ENCODE measurements at regions of chr12 and their contacts with region 1.

Region 1: GRCh38 chr12:120580787-120581723 is at the start of gene POP5:
- DNase-seq: peak; percentile 96 to 97 (median 97)
- H3K4me3 ChIP-seq: peak within 1 kb of the TSS; percentile 76 to 96 (median 91)
- H3K27ac ChIP-seq: peak within 1 kb of the TSS; percentile 60 to 78
- H3K4me1 ChIP-seq: peaks cover 8 to 34% (median 21%) of the 10 kb centered on the region in 4 experiments
- H3K27me3 ChIP-seq: peaks cover 0 to 23% (median 9%) of the 10 kb centered on the region in 5 experiments

Region 2: DNA sequence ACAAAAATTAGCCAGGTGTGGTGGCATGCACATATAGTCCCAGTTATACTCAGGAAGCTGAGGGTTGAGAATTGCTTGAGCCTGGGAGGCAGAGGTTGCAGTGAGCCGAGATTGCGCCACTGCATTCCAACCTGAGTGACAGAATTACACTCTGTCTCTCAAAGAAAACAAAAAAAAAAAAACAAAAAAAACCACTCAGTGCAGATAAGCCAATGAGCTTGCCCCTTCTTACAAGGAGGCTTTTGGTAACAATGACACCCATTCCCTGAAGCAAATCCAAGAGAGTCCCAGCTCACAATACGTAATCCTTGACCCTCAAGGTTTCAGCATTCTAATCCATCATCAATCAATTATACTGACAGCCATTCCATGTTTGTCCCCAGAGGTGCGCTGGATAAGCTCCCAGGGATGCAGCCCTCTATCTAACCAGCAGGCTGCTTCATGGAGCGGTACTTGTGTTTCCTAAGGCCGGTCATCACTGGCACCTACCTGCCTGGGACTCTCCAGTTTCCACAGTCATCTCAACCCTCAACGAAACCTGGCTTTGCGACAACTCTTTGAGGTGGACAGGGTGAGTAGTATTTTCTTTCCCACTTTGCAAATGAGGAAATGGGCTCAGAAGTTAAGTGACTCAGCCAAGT is 398.9 kb before region 1 on chr12:
- CTCF ChIA-PET with region 1: no interaction called
- POLR2A ChIA-PET with region 1: no interaction called
- DNase-seq: no peak
- H3K4me3 ChIP-seq: no peak overlapping the region
- H3K27ac ChIP-seq: no peak overlapping the region
- H3K4me1 ChIP-seq: no peaks in the 10 kb centered on the region
- H3K27me3 ChIP-seq: no peaks in the 10 kb centered on the region

Region 3: DNA sequence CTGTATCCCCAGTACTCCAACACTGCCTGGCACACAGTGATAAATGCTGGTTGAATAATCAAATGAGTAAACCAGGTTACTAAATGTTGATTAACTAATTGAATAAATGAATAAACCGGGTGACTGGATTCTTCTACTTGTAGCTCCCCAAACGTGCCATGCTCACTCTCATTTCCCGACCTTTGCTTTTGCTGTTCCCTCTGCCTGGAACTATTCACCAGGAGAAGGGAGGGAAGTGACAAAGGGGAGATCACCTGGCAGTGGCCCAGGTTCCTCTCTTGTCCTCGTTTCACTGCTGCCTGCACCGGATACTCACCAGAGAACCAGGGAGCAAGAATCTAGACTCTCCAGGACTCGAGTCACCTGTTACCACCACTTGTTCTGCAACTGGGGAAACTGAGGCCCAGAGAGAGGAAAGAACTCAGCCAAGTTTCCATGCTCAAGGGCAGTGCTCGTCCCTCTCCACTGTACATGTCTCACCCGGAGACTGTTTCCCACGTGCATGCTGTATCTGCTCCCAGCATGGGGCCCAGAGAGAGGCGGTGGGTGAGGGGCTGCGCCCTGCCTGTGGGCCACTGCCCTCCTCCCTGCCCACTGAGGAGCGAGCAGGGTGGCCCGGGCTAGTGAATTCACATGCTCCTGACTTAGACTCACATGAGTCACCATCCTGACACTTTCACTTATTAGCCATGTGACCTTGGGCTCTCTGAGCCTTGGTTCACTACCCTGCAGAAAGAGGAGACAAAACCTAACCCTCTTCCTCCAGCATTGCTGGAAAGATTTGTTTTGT is 17.8 kb after region 1 on chr12:
- CTCF ChIA-PET with region 1: interaction called, 4 read pairs
- POLR2A ChIA-PET with region 1: interaction called, 10 read pairs
- DNase-seq: peak in 2 of 3 donors; percentile 34 to 44
- H3K4me3 ChIP-seq: no peak overlapping the region
- H3K27ac ChIP-seq: no peak overlapping the region
- H3K4me1 ChIP-seq: peaks cover 2 to 28% (median 9%) of the 10 kb centered on the region in 4 experiments
- H3K27me3 ChIP-seq: no peaks in the 10 kb centered on the region

Region 4: DNA sequence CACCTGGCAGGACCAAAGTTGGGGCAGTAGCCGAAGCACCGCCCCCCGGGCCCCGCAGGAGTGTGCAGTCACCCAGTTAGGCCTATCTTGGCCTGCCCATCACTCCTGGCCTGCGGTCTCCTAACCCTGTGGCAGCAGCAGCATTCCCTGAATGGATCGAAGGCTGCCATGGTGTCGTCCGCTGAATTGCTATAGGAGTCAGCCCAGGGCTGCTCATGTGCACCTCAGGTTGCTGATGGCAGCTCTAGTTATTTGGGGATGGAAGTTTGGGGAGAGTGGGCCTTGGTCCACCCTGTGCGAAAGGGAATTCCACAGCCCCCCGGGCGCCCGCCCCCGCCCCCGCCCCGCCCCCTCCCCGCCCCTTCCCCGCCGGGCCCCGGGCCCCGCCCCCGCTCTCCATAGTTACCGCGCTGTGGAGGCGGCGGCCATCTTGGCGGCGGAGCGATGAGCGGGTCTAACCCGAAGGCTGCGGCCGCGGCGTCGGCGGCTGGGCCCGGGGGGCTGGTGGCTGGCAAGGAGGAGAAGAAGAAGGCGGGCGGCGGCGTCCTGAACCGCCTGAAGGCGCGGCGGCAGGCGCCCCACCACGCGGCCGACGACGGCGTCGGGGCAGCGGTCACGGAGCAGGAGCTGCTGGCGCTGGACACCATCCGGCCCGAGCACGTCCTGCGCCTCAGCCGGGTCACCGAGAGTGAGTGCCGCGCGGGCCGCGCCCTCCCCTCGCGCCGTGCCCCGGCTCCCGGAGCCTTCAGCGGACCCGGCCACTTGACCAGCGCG is 129.2 kb after region 1 on chr12 and contains the start of gene UNC119B:
- CTCF ChIA-PET with region 1: interaction called, 11 read pairs
- POLR2A ChIA-PET with region 1: interaction called, 3 read pairs
- DNase-seq: peak; percentile 59 to 75 (median 72)
- H3K4me3 ChIP-seq: peak within 1 kb of the TSS; percentile 67 to 94 (median 87)
- H3K27ac ChIP-seq: peak within 1 kb of the TSS; percentile 85 to 89
- H3K4me1 ChIP-seq: peaks cover 0 to 28% (median 20%) of the 10 kb centered on the region in 4 experiments
- H3K27me3 ChIP-seq: no peaks in the 10 kb centered on the region

Region 5: DNA sequence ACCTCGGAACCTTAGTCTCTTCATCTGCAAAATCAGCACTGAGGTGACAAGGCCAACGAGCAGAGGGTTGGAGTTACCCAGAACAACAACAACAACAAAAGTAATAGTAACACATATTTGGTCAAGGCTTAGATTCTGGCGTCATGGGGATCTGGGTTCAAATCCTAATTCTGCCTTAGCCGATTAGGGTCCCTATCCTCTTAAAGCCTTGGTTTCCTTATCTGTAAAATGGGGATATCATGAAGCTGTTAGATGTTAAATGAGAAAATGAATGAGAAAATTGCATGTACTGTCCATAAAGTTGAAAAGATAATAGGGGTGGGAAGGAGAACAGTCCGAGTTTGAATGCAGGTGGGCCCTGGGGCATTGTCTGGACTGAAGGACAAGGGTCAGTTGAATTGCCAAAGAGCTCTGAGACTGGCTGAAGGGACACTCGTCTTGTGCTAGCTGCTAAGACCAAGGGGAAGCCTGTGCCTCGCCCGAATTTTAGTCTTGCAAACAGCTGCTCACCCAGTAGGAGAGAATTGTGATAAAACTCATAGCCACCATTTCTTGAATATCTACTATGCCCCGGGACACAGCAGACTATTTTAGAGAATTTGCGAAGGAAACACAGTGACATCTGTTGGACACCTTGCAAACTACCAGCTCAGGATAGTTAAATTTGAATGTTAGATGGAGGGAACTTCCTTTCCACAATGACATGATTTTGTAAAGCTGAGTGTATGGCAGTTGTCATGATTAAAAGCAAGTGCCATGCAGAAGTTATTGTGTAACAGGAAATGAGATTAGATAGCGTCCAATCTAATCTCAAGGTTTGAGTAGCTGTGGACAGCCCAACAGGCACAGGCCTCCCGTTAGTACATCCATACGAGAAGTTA is 390.5 kb after region 1 on chr12:
- CTCF ChIA-PET with region 1: interaction called, 19 read pairs
- POLR2A ChIA-PET with region 1: no interaction called
- DNase-seq: peak; percentile 81 to 91 (median 90)
- H3K4me3 ChIP-seq: peak overlapping the region in 2 of 7 experiments; percentile 25 to 31
- H3K27ac ChIP-seq: no peak overlapping the region
- H3K4me1 ChIP-seq: peaks cover 0 to 11% (median 2%) of the 10 kb centered on the region in 4 experiments
- H3K27me3 ChIP-seq: no peaks in the 10 kb centered on the region

Region 6: GRCh38 chr12:121005346-121005815 is 424.3 kb after region 1 on chr12:
- CTCF ChIA-PET with region 1: interaction called, 12 read pairs
- POLR2A ChIA-PET with region 1: no interaction called
- DNase-seq: peak; percentile 34 to 66 (median 65)
- H3K4me3 ChIP-seq: no peak overlapping the region
- H3K27ac ChIP-seq: no peak overlapping the region
- H3K4me1 ChIP-seq: peaks cover 0 to 5% (median 0%) of the 10 kb centered on the region in 4 experiments
- H3K27me3 ChIP-seq: no peaks in the 10 kb centered on the region

Measured in common myeloid progenitor, CD34-positive (primary cell).